Activated T-helper 2 cell treated with anti-CD3 and anti-CD28 coated beads, Interferon-gamma antibody, Interleukin-2, Interleukin-4, amounts not matched to agents 10 μg/mL and 5 μg/mL and 100 μg/mL, durations not matched to agents 14 hours and 24 hours and 36 hours (primary cell): ENCODE measurements at regions of chr13 and their contacts with region 1.

Region 1: DNA sequence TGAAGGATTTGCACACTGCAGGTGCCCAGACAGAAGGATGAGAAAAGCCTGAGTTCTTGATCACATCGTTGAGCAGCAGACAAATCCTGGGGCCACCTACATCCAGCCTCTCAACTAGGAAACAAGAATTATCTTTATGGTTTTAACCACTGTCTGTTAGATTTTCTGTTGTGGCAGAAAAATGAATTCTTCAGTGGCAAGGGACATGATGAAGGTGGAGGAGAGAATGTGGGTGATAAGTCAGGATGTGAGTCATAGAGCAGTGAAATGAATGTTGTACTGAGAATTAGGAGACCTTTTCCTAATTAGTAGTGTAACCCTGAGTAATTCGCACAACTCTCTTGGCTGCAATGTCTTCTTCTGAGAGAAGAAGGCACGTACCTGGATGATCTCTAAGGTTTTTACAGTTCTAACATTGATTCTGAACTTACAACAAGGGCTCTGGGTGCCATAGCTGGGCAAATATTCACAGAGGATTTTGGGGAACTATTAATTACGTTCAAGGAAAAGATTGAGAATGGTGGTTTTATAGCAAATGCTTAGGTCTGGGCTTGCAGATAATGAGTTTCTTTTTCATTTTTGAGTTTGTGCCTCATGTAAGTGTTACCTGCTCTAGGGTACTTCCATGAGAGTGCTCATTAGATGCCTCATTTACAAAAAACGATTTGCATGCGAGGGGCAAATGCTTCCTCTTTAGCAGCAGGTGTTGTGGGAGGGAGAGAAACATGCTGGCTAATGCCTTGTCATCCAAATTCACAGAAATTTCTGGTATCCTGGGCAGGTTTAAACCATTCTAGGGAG is 111.0 kb upstream of the KL start:
- DNase-seq: peak; percentile 26
- H3K4me3 Mint-ChIP-seq: peak overlapping the region; percentile 71
- H3K27ac Mint-ChIP-seq: peak overlapping the region; percentile 86
- H3K4me1 Mint-ChIP-seq: peaks cover 35% of the 10 kb centered on the region
- H3K27me3 Mint-ChIP-seq: peaks cover 5% of the 10 kb centered on the region

Region 2: DNA sequence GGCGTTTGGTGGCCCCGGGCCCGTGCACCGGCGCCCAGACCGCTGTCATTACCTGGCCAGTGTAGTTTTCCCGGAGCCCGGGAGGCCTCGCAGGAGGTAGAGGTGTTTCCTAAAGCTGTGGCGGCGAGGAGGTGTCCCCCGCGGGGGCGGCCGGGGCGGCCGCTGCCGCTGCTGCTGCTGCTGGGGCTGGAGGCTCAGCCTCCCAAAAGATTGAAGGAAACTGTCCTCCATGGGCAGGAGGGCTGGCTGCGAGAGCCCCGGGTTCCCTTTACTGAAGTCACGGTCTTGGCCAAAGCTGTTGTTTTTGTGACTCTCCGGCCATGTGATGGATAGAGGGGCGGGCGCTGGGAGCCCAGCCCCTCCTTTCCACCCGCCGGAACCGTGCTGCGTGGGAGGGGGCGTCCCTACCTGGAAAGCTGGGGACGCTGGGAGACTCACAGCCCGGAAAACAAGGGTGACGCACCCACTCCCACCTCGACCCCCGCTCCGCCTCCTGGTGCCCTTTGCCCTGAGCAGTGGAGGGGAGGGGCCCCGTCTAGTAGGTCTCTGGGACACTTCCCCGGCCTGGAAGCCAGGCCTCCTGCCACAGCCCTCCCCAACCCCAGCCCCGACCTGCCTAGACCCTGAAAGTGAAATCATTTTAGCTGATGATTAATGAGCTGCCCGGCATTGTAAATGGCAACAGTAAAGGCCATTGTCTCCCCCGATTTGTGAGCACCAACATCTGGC is 477.2 kb before region 1 on chr13 and contains the start of gene N4BP2L1:
- intact Hi-C with region 1: loop called (anchors 5 kb)
- DNase-seq: peak; percentile 76
- H3K4me3 Mint-ChIP-seq: peak within 1 kb of the TSS; percentile 98
- H3K27ac Mint-ChIP-seq: peak within 1 kb of the TSS; percentile 100
- H3K4me1 Mint-ChIP-seq: peaks cover 39% of the 10 kb centered on the region
- H3K27me3 Mint-ChIP-seq: no peaks in the 10 kb centered on the region
- total RNA-seq, gene N4BP2L1: 26.1 and 28.6 TPM in 2 replicates

Region 3: GRCh38 chr13:32783067-32783466 is 122.2 kb before region 1 on chr13:
- intact Hi-C with region 1: loop called (anchors 5 kb)
- DNase-seq: no peak
- H3K4me3 Mint-ChIP-seq: no peak overlapping the region
- H3K27ac Mint-ChIP-seq: peak overlapping the region; percentile 17
- H3K4me1 Mint-ChIP-seq: peaks cover 20% of the 10 kb centered on the region
- H3K27me3 Mint-ChIP-seq: no peaks in the 10 kb centered on the region

Region 4: GRCh38 chr13:32917504-32917903 is 12.2 kb after region 1 on chr13:
- intact Hi-C with region 1: loop called (anchors 1 kb)
- DNase-seq: no peak
- H3K4me3 Mint-ChIP-seq: no peak overlapping the region
- H3K27ac Mint-ChIP-seq: peak overlapping the region; percentile 53
- H3K4me1 Mint-ChIP-seq: peaks cover 26% of the 10 kb centered on the region
- H3K27me3 Mint-ChIP-seq: no peaks in the 10 kb centered on the region

Region 5: DNA sequence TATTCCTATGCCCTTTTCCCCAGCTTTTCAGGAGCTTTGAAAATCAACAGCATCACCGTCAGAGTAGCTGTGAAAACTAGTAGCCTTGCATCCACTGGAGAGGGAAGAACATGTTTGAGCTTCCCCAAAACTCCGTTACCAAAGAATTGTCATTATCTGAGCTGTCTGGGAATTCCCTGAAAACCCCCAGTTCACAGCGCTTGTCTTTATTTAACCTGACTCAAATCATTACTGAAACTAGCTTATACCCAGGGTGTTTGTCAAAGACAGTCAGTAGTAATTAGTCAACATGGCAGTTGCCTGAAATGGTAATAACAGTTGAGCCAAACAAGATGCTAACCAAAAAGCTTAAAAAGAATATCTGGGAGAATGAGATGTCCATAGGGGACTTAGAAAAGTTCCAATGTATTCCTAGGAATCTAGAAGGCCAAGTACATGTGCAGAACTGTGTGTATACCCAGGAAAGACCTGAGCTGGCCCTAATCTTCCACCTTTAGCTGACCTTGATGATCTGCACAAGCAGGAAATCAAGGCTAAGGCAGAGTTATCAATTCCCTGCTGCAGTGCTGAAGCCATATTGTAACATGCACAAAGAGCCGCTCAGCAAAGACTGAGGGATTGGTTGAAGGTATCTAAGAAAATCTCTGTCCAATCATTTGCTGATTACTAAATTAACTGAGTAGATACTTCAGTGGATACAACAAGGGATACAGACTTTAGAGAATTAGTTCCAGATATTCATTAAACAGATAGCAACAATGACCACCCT is 241.8 kb after region 1 on chr13:
- intact Hi-C with region 1: loop called (anchors 5 kb)
- DNase-seq: no peak
- H3K4me3 Mint-ChIP-seq: no peak overlapping the region
- H3K27ac Mint-ChIP-seq: peak overlapping the region; percentile 74
- H3K4me1 Mint-ChIP-seq: peaks cover 15% of the 10 kb centered on the region
- H3K27me3 Mint-ChIP-seq: no peaks in the 10 kb centered on the region